Calu3 (cell line): ENCODE measurements at regions of chr2 and their contacts with region 1.

Region 1: DNA sequence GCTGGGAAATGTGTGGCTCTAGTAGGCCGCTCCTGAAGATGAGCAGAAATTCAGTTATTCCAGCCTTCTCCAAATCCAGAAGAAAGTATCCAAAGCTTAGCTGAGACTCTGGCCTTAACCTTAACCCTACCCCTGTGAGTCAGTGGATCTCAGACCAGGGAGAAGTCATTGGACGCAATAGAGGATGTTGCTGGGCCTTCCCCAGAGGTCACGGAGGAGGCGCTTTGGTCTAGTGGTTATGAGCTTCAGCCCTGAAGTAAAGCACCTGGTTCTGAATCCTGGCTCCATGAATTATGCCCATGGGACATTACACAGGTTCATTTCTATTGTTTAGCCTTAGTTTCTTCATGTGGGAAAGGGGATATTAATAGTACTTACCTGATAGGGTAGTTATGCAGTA is 24.0 kb downstream of the PKDCC start:
- DNase-seq: no peak
- H3K4me3 Mint-ChIP-seq: no peak overlapping the region
- H3K27ac Mint-ChIP-seq: no peak overlapping the region
- H3K4me1 Mint-ChIP-seq: peaks cover 22% of the 10 kb centered on the region
- H3K27me3 Mint-ChIP-seq: no peaks in the 10 kb centered on the region
- CTCF ChIP-seq: no peak

Region 2: GRCh38 chr2:41955316-41956043 is 116.3 kb before region 1 on chr2:
- CTCF ChIA-PET with region 1: no interaction called
- intact Hi-C with region 1: no loop called
- DNase-seq: no peak
- H3K4me3 Mint-ChIP-seq: no peak overlapping the region
- H3K27ac Mint-ChIP-seq: no peak overlapping the region
- H3K4me1 Mint-ChIP-seq: peaks cover 21% of the 10 kb centered on the region
- H3K27me3 Mint-ChIP-seq: peaks cover 9% of the 10 kb centered on the region
- CTCF ChIP-seq: no peak

Region 3: DNA sequence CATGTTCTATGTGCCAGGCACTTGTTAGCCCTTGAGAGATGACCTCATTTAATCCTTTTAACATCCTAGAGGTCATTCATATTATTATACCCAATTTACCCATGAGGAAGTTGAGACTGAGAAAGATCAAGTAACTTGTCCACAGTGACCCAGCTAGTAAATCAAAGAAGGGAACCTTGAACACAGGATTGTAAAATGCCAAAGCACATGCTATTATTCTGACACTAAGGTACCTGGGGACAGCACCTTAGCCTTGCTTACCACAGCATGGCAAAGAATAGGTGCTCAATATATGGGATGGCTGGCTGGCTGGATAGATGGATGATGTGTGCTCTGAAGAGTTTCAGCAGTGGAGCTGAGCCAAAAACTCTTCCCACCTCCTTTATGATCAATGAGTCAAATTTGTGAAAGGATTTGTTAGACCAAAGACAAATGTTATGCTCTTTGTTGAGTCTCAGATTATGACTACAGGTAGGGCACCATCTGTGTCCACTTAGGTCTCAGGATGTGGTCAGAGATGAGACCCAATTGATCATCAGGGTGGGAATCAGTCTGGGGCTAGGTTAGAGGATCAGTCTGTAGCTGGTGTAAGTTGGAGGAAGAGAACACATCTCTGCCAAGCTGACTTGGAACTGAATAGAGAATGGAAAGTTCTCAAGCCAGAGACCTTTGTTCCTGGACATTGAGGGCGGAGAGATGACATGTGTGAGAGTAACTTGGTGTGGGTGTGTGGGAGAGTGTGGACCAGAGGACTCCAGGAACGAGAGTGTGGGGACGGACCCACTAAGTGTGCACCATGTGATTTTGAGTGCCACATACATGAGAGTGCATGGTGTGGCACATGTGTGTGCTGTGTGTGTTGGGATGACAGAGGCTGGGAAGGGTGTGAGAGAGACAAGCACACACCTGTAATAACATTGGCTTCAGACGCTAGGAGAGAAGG is 40.2 kb before region 1 on chr2:
- CTCF ChIA-PET with region 1: interaction called, 10 read pairs
- intact Hi-C with region 1: no loop called
- DNase-seq: no peak
- H3K4me3 Mint-ChIP-seq: no peak overlapping the region
- H3K27ac Mint-ChIP-seq: no peak overlapping the region
- H3K4me1 Mint-ChIP-seq: no peaks in the 10 kb centered on the region
- H3K27me3 Mint-ChIP-seq: peaks cover 30% of the 10 kb centered on the region
- CTCF ChIP-seq: no peak

Region 4: DNA sequence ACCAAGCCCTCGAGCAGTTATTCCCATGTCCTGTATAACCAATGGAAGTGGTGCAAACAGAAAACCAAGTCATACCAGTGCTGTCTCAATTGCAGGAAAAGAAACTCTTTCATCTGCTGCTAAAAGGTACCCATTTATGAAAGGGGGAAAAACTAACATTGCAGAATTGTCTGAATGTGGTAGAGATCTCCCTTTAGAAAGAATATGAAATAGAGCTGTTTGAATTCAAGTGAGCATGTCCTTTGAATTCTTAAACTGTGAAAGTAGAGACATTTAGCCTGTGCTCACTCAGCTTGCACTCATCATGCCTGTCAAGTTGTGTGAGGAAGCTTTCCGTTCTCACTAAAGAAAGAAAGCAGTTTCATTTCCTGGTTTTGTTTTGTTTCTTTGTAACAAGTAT is 184.7 kb after region 1 on chr2:
- CTCF ChIA-PET with region 1: no interaction called
- intact Hi-C with region 1: no loop called
- DNase-seq: no peak
- H3K4me3 Mint-ChIP-seq: no peak overlapping the region
- H3K27ac Mint-ChIP-seq: no peak overlapping the region
- H3K4me1 Mint-ChIP-seq: peaks cover 8% of the 10 kb centered on the region
- H3K27me3 Mint-ChIP-seq: no peaks in the 10 kb centered on the region
- CTCF ChIP-seq: no peak